BJ (cell line): ENCODE measurements at regions of chr10 and their contacts with region 1.

Region 1: GRCh38 chr10:43809211-43809930 is 160.7 kb upstream of the ZNF32 start:
- DNase-seq: peak; percentile 91
- H3K4me3 ChIP-seq: no peak overlapping the region
- H3K27me3 ChIP-seq: no peaks in the 10 kb centered on the region
- CTCF ChIP-seq: no peak

Region 2: GRCh38 chr10:43863859-43864591 is 54.7 kb after region 1 on chr10:
- CTCF ChIA-PET with region 1: interaction called, 3 read pairs
- POLR2A ChIA-PET with region 1: interaction called, 12 read pairs
- DNase-seq: peak; percentile 44
- H3K4me3 ChIP-seq: no peak overlapping the region
- H3K27me3 ChIP-seq: no peaks in the 10 kb centered on the region
- CTCF ChIP-seq: no peak